ENCODE measurements at regions of chr22 and their contacts with region 1.

Region 1: GRCh38 chr22:26483439-26484359 is at the starts of genes HPS4 and SRRD:
- DNase-seq: peak; percentile 88
- H3K4me3 Mint-ChIP-seq: peak within 1 kb of the TSS; percentile 95
- H3K27ac Mint-ChIP-seq: peak within 1 kb of the TSS; percentile 99
- H3K4me1 Mint-ChIP-seq: peaks cover 51% of the 10 kb centered on the region
- H3K27me3 Mint-ChIP-seq: no peaks in the 10 kb centered on the region
- CTCF ChIP-seq: no peak
- total RNA-seq, gene HPS4: 35.6 and 38.3 TPM in 2 replicates
- total RNA-seq, gene SRRD: 22.4 and 27.9 TPM in 2 replicates

Region 2: DNA sequence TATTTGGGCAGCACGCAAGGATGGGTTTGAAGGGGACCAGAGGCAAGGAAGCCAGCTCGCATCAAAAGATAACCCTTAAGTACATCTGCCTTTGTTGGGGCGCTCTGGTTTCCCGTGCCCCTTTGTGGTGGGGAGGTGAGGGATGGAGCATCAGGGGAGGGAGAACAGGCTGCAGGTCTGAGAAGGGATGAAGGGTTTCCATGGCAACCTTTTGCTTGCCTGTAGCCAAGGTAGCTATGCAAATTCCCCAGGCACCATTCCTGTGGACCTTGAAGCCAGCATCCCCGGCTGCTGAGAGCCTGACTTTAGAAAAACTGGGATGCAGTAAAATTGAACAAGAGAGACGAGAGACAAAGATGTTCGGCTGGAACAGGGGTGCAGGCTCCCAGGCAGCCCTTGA is 238.7 kb before region 1 on chr22:
- CTCF ChIA-PET with region 1: no interaction called
- POLR2A ChIA-PET with region 1: no interaction called
- intact Hi-C with region 1: no loop called
- DNase-seq: no peak
- H3K4me3 Mint-ChIP-seq: no peak overlapping the region
- H3K27ac Mint-ChIP-seq: no peak overlapping the region
- H3K4me1 Mint-ChIP-seq: no peaks in the 10 kb centered on the region
- H3K27me3 Mint-ChIP-seq: peaks cover 64% of the 10 kb centered on the region
- CTCF ChIP-seq: no peak

Region 3: GRCh38 chr22:26471522-26471921 is 12.2 kb before region 1 on chr22:
- CTCF ChIA-PET with region 1: interaction called, 8 read pairs
- POLR2A ChIA-PET with region 1: interaction called, 62 read pairs
- intact Hi-C with region 1: no loop called
- DNase-seq: peak; percentile 80
- H3K4me3 Mint-ChIP-seq: peak overlapping the region; percentile 14
- H3K27ac Mint-ChIP-seq: peak overlapping the region; percentile 74
- H3K4me1 Mint-ChIP-seq: peaks cover 26% of the 10 kb centered on the region
- H3K27me3 Mint-ChIP-seq: no peaks in the 10 kb centered on the region
- CTCF ChIP-seq: no peak

Region 4: GRCh38 chr22:26672590-26673468 is 189.1 kb after region 1 on chr22:
- CTCF ChIA-PET with region 1: interaction called, 3 read pairs
- POLR2A ChIA-PET with region 1: interaction called, 14 read pairs
- intact Hi-C with region 1: no loop called
- DNase-seq: peak; percentile 94
- H3K4me3 Mint-ChIP-seq: peak overlapping the region; percentile 89
- H3K27ac Mint-ChIP-seq: peak overlapping the region; percentile 99
- H3K4me1 Mint-ChIP-seq: peaks cover 37% of the 10 kb centered on the region
- H3K27me3 Mint-ChIP-seq: no peaks in the 10 kb centered on the region
- CTCF ChIP-seq: peak; percentile 37

Measured in MCF 10A (cell line).